Activated T-helper 2 cell treated with anti-CD3 and anti-CD28 coated beads, Interferon-gamma antibody, Interleukin-2, Interleukin-4, amounts not matched to agents 10 μg/mL and 5 μg/mL and 100 μg/mL, durations not matched to agents 14 hours and 24 hours and 36 hours (primary cell): ENCODE measurements at regions of chr21 and their contacts with region 1.

Region 1: GRCh38 chr21:17611414-17612022 is 1.2 kb downstream of the BTG3 start:
- DNase-seq: peak; percentile 76
- H3K4me3 Mint-ChIP-seq: peak overlapping the region; percentile 92
- H3K27ac Mint-ChIP-seq: peak overlapping the region; percentile 96
- H3K4me1 Mint-ChIP-seq: peaks cover 53% of the 10 kb centered on the region
- H3K27me3 Mint-ChIP-seq: no peaks in the 10 kb centered on the region

Region 2: GRCh38 chr21:17491716-17492414 is 119.7 kb before region 1 on chr21:
- intact Hi-C with region 1: loop called (anchors 2 kb)
- DNase-seq: no peak
- H3K4me3 Mint-ChIP-seq: no peak overlapping the region
- H3K27ac Mint-ChIP-seq: peak overlapping the region; percentile 64
- H3K4me1 Mint-ChIP-seq: peaks cover 32% of the 10 kb centered on the region
- H3K27me3 Mint-ChIP-seq: peaks cover 12% of the 10 kb centered on the region

Region 3: GRCh38 chr21:17512253-17513213 is 99.0 kb before region 1 on chr21 and contains the start of gene CXADR:
- intact Hi-C with region 1: loop called (anchors 5 kb)
- DNase-seq: peak; percentile 72
- H3K4me3 Mint-ChIP-seq: peak within 1 kb of the TSS; percentile 83
- H3K27ac Mint-ChIP-seq: no peak within 1 kb of the TSS
- H3K4me1 Mint-ChIP-seq: peaks cover 15% of the 10 kb centered on the region
- H3K27me3 Mint-ChIP-seq: peaks cover 52% of the 10 kb centered on the region
- total RNA-seq, gene CXADR: 0.39 and 0.64 TPM in 2 replicates

Region 4: GRCh38 chr21:17598437-17598836 is 13.1 kb before region 1 on chr21:
- intact Hi-C with region 1: loop called (anchors 2 kb)
- DNase-seq: no peak
- H3K4me3 Mint-ChIP-seq: no peak overlapping the region
- H3K27ac Mint-ChIP-seq: no peak overlapping the region
- H3K4me1 Mint-ChIP-seq: peaks cover 34% of the 10 kb centered on the region
- H3K27me3 Mint-ChIP-seq: no peaks in the 10 kb centered on the region

Region 5: GRCh38 chr21:17819114-17819876 is 207.8 kb after region 1 on chr21 and contains the start of gene C21orf91:
- intact Hi-C with region 1: loop called (anchors 1 kb)
- DNase-seq: peak; percentile 86
- H3K4me3 Mint-ChIP-seq: peak within 1 kb of the TSS; percentile 94
- H3K27ac Mint-ChIP-seq: peak within 1 kb of the TSS; percentile 100
- H3K4me1 Mint-ChIP-seq: peaks cover 35% of the 10 kb centered on the region
- H3K27me3 Mint-ChIP-seq: no peaks in the 10 kb centered on the region
- total RNA-seq, gene C21orf91: 22.5 and 27.0 TPM in 2 replicates